ENCODE measurements at regions of chr3 and their contacts with region 1.

Region 1: DNA sequence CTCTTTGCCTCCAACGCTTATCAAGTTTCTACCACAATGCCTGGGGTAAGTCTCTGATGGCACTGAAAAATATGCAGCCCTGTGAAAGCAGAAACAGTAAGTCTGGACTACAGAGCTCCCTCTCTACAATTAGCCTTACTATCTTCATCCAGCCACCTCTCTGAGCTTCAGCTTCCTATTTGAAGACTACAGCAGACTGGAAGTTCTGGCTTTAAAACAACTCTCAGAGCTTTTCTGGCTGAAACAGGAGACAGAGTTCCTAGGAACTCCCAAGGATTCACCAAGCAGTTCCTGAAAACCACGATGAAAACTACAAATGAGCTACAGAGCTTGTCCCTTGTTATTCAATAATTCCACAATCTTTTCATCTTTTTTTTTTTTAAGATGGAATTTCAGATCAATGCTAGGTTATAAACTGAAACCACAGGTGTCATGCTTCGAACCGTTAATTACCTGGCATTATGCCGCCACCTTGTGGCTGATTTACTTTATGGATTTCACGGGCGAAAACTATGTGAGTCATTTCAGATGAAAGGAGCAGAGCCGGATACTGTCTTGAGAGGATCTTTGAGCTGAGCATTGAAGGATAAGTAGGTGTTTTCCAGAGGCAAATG is 3.9 kb downstream of the CRYGS start:
- DNase-seq: peak in 9 of 10 donors; percentile 62 to 93 (median 76)
- H3K4me3 ChIP-seq: peak overlapping the region in 35 of 59 donors; percentile 5 to 55 (median 32)
- H3K27ac ChIP-seq: peak overlapping the region in 6 of 59 donors; percentile 10 to 59 (median 20)
- H3K27me3 ChIP-seq: no peaks in the 10 kb centered on the region
- CTCF ChIP-seq: peak; percentile 67 to 96 (median 84)

Region 2: DNA sequence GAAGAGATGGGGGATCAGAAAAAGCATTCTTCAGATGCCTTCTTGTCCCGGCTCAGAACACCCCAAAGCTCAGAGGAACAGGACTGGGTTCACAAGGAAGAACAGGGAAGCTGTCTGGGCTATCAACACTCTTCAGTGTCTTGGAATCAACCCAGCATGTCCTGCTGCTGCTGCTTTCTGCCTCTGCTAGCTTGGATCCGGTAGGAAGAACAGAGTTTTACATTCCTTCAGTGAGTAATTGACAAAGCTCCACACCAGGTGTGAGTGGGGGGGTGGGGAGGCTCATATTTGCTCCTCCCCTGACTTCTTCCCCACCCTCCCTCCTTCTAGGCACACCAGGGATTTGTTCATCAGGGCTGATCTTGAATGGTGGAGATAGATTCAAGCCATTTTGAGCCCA is 418.4 kb before region 1 on chr3:
- intact Hi-C with region 1: no loop called
- DNase-seq: peak in 1 of 10 donors; percentile 36
- H3K4me3 ChIP-seq: peak overlapping the region in 8 of 59 donors; percentile 3 to 31 (median 14)
- H3K27ac ChIP-seq: peak overlapping the region in 7 of 59 donors; percentile 10 to 31 (median 18)
- H3K27me3 ChIP-seq: no peaks in the 10 kb centered on the region
- CTCF ChIP-seq: no peak

Region 3: DNA sequence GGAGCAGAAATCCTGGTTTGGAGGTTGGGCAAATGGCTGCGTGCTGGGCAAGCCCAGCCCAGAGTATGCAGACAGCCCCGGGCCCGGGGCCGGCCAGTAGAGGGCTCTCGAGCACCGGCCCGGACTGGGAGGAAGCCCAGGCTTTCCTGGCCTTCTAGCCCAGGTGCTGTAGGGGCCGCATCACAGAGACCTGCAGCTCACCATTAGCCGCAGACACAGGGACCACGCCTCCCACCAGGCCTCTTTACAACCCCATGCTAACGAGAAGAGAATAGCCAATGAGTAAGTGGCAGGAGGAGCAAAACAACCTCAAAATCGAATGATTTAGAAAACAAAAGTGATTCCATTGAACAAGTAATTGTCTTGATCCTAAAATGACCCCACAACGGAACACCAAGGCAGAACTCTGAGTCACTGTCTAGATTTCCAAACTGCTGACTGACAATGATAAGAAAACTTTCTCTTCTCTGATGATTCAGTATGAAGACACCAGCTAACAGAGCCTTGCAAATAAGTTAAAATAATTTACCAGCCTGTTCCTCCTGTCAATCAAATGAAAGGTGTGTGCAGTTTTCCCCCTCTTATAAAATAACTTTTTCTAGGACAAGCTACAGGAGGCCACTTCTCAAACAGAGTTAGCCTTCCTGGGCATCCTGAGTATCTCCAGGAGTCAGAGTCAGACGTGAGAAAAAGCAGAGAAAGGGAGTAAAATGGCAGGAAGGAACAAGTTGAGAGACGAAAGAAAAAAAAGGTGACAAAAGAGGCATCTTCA is 280.5 kb before region 1 on chr3:
- intact Hi-C with region 1: loop called (anchors 1 to 5 kb)
- DNase-seq: peak in 8 of 10 donors; percentile 35 to 81 (median 52)
- H3K4me3 ChIP-seq: no peak overlapping the region
- H3K27ac ChIP-seq: no peak overlapping the region
- H3K27me3 ChIP-seq: no peaks in the 10 kb centered on the region
- CTCF ChIP-seq: peak; percentile 35 to 87 (median 71)

Measured in dorsolateral prefrontal cortex (tissue), 120 donors.